BJ (cell line): ENCODE measurements at regions of chr10 and their contacts with region 1.

Region 1: GRCh38 chr10:88835096-88835909 is 16.3 kb downstream of the ANKRD22 start:
- DNase-seq: peak; percentile 41
- H3K4me3 ChIP-seq: no peak overlapping the region
- H3K27me3 ChIP-seq: no peaks in the 10 kb centered on the region
- CTCF ChIP-seq: peak; percentile 84

Region 2: GRCh38 chr10:88744002-88744401 is 91.3 kb before region 1 on chr10:
- CTCF ChIA-PET with region 1: no interaction called
- POLR2A ChIA-PET with region 1: no interaction called
- DNase-seq: no peak
- H3K4me3 ChIP-seq: no peak overlapping the region
- H3K27me3 ChIP-seq: peaks cover 7% of the 10 kb centered on the region; the same call in 1 of the 2 replicates
- CTCF ChIP-seq: no peak

Region 3: DNA sequence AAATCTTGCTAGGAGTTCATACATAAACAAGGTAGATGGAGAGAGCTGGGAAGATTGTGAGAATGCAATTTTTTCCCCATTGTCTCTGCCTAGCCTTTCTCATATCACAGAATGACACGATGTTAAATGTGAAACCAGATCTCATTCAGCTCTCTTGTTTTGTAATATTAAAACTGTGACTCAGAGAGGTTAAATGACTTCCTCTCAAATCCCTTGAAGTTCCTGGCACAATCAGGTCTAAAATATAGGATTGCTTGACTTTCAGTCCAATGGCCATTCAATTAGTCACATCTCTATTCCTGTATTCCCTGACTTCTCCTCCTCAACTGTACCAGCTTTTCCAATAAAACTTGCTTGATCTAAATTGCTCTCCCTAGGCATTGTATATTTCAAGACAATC is 13.2 kb after region 1 on chr10:
- CTCF ChIA-PET with region 1: interaction called, 17 read pairs
- POLR2A ChIA-PET with region 1: interaction called, 3 read pairs
- DNase-seq: peak; percentile 49
- H3K4me3 ChIP-seq: no peak overlapping the region
- H3K27me3 ChIP-seq: no peaks in the 10 kb centered on the region
- CTCF ChIP-seq: no peak

Region 4: DNA sequence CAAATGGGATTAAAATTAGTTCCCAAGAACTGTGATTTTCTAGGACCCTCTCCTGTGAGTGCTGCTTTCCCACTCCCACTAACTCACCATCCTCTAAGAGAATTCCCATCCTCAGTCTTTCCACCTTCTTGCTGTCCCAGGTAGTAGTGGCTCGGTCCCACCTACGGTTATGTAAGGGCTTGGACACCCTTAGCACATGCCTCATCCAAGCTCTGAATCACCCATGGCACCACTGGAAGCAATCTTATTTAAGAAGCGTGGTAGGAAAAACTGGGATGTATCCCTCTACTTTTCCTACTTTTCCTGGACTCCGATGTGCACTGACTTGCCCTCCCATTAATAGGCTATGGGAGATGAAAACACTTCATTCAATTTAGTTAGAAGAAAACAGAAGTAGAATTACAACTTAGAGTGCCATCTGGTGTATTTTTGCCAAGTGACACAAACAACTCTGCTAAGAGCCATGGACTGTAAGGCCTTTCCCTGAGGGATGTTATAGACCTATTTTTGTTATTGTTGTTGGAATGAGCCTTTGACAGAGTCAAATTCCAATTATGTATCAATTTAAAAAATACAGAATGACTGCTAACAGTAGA is 30.1 kb after region 1 on chr10:
- CTCF ChIA-PET with region 1: interaction called, 17 read pairs
- POLR2A ChIA-PET with region 1: no interaction called
- DNase-seq: no peak
- H3K4me3 ChIP-seq: no peak overlapping the region
- H3K27me3 ChIP-seq: peaks cover 1% of the 10 kb centered on the region
- CTCF ChIP-seq: 0 out of 2 replicates have a peak, but pooled peaks have one; percentile 15

Region 5: DNA sequence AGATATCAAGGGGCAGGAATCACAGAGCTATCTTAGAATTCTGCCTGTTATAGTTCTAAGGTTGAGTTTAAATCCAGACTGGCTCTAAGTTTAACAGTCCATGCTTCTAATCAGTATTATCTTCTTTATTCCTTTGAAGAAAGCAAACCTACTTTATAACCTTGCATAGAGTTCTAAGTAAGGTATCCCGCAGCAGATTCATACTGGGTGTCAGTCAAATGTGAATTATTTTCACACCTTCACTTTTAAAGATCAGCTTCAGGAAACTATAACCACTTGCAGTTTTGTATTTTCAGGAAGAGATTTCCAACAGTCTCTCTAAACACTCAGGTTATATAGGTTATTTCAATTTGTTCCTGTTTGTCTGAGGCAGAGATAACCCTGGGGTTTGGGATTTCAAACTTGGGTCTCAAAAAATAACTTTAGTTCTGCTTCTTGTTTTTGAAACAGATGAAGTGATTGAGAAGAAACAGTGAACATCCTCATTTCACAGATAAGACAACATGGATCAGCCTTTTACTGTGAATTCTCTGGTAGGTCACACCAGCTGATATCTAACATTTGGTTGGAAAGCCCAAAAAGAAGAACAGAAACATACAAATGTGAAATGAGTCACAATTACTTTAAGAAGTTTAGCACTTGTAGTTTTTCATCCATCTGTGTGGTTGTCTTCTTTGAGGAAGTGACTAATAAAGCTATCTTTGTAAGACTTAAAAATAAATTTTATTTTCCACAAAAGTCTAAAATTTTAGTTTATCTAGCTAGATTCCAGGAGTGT is 66.1 kb after region 1 on chr10:
- CTCF ChIA-PET with region 1: interaction called, 12 read pairs
- POLR2A ChIA-PET with region 1: no interaction called
- DNase-seq: no peak
- H3K4me3 ChIP-seq: no peak overlapping the region
- H3K27me3 ChIP-seq: no peaks in the 10 kb centered on the region
- CTCF ChIP-seq: no peak

Region 6: DNA sequence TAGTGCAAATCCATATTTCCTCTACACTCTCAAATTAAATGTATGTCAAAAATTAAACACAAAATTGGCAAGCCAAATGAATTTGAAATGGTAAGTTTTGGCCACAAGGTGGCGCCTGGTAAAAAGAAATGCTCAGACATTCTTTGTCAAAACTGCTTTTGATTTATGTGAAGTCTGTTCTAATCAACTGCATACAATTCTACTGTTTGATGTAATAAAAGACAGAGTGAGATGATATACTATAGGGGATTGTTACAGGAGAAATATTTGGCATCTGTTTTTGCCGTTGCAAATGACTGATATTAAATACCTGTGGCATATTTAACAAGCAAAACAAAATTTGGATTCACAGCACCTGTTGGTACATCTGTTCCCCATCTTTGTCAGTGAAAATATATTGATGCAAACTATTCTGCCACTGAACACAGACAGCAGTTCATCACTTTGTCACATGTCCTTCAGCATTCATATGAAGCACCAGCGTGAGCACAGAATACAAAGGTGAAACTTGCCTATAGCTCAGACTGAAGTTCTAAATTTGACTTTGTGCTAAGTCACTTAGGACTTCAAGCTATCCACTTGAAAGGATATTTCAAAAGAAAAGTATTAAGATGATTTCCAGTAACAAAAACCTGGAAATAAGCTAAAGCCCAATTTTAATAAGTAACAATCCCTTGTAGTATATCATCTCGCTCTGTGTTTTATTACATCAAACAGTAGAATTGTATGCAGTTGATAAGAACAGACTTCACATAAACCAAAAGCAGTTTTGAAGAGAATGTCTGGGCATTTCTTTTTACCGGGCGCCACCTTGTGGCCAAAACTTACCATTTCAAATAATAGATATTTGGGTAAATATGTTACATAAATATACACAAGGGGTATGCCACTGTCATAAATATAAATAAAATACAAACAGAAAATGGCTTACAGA is 382.0 kb after region 1 on chr10:
- CTCF ChIA-PET with region 1: interaction called, 16 read pairs
- POLR2A ChIA-PET with region 1: no interaction called
- DNase-seq: no peak
- H3K4me3 ChIP-seq: no peak overlapping the region
- H3K27me3 ChIP-seq: no peaks in the 10 kb centered on the region
- CTCF ChIP-seq: peak; percentile 69